ENCODE measurements at regions of chr6 and their contacts with region 1.

Region 1: DNA sequence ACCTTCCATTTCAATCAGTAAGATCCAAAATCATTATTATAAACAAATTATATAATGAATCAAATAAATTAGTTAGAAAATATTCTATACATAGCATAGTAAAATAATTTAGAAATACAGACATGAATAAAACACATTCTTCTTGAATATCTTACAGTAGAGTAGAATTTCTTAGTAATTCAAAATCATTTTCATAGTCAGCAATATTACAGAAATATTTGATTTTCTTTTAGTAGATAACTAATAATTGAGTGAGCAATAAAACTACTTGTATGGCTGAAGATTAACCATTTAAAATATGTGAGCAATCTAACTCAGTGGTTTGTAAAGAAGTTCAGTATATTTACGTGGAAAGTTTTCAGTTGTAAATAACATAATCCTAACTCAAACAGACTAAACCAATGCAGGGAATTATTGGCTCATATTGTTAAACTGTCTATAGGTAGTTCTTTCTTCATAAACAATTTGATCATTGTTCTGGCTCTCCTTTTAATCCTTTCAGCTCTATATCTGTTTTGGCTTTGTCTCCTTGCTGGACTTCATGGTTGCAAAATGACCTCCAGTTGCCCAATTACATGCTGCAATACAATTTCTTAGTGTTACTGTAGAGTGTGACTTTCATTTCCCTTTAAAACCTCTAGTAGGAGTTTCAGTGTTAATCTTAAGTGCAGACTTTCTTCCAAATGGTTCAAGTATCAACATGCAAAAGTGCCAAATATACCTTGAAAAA is 307.5 kb downstream of the EYS start:
- DNase-seq: no peak
- H3K4me3 ChIP-seq: no peak overlapping the region
- H3K27ac ChIP-seq: no peak overlapping the region
- H3K4me1 ChIP-seq: no peaks in the 10 kb centered on the region
- H3K27me3 ChIP-seq: no peaks in the 10 kb centered on the region
- CTCF ChIP-seq: no peak
- EP300 ChIP-seq: no peak
- POLR2A ChIP-seq: no peak

Region 2: DNA sequence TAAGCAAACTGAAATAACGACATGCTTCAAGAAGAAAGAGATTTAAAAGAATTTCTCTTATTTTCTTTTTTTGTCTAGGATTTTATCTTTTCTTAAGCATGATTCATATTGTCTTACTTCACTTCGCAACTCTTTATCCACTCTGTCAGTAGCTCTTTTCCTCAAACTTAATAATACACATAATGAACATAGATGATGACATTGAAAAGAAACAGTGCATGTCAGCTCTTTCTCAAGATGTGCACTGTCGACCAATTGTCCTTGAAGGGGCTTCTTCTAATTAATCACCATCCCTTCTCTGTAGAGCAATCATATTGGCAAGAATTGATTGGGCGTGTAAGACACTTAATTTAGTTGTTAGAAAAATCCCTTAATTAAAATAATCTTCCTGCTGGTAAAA is 49.0 kb before region 1 on chr6:
- in situ Hi-C with region 1: no loop called
- intact Hi-C with region 1: no loop called
- DNase-seq: no peak
- H3K4me3 ChIP-seq: no peak overlapping the region
- H3K27ac ChIP-seq: no peak overlapping the region
- H3K4me1 ChIP-seq: no peaks in the 10 kb centered on the region
- H3K27me3 ChIP-seq: no peaks in the 10 kb centered on the region
- CTCF ChIP-seq: no peak
- EP300 ChIP-seq: no peak
- POLR2A ChIP-seq: no peak

Region 3: DNA sequence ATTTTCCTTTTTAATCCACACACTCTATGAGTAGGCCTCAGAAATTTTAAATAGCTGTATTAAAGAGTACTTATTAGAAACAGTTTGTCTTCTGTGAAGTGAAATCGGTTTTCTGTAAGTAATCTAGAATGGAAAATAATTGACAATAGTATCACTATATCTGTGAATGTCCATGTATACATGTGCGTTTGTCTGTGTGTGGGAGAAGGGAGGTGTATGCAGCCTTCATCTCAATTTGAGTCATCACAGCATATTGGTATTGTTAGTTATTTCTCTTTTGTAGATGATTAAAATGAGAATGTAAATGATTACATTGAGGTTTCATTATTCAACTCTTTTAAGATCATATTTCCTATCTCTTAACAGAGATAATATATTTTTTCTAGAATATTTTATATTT is 101.5 kb after region 1 on chr6:
- in situ Hi-C with region 1: loop called in 1 of 4 experiments (anchors 25 kb)
- intact Hi-C with region 1: no loop called
- DNase-seq: no peak
- H3K4me3 ChIP-seq: no peak overlapping the region
- H3K27ac ChIP-seq: no peak overlapping the region
- H3K4me1 ChIP-seq: no peaks in the 10 kb centered on the region
- H3K27me3 ChIP-seq: no peaks in the 10 kb centered on the region
- CTCF ChIP-seq: no peak
- EP300 ChIP-seq: no peak
- POLR2A ChIP-seq: no peak

Measured in transverse colon (tissue), 4 donors.